Posterior vena cava (tissue), 2 donors: ENCODE measurements at regions of chr7 and their contacts with region 1.

Region 1: DNA sequence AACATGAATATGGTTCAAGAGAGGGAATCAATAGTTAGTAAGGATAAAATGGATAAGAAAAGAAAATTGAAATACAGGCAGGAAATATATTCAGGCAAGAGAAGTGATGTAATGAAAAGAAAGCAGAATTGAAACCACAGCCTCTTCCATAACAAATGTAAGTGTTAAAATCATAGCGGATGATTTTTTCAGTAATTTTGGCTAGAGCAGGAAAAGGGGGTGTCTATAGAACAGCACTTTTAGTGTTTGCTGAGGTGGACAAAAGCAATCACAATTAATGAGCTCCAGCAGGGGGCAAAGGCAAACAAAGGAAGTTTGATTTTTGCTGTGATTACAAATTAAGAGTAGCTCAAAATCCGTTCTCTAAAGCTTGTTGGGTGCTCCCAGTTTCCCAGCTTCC is 79.0 kb downstream of the TRIL start:
- DNase-seq: no peak

Region 2: DNA sequence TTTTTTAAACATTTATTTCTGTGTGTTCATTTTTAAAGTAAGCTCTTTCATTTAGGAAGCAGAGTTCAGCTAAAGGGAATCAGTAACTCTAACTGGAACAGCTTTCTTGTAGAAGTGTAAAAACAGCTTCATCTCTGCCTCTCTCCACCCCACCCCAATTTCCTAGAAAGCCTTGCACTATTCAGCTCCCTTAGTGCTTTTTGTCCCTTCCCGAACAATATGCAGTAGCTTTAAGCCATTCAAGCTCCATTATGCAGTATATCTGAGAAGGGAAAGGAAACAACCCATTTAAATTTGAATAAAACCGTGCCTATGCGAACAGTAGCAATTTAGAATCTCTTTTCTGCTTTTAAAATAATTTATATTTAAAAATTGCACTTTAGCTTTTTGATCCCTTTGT is 55.5 kb before region 1 on chr7:
- intact Hi-C with region 1: loop called in 1 of 2 experiments (anchors 2 kb)
- DNase-seq: no peak